ENCODE measurements at regions of chr5 and their contacts with region 1.

Region 1: DNA sequence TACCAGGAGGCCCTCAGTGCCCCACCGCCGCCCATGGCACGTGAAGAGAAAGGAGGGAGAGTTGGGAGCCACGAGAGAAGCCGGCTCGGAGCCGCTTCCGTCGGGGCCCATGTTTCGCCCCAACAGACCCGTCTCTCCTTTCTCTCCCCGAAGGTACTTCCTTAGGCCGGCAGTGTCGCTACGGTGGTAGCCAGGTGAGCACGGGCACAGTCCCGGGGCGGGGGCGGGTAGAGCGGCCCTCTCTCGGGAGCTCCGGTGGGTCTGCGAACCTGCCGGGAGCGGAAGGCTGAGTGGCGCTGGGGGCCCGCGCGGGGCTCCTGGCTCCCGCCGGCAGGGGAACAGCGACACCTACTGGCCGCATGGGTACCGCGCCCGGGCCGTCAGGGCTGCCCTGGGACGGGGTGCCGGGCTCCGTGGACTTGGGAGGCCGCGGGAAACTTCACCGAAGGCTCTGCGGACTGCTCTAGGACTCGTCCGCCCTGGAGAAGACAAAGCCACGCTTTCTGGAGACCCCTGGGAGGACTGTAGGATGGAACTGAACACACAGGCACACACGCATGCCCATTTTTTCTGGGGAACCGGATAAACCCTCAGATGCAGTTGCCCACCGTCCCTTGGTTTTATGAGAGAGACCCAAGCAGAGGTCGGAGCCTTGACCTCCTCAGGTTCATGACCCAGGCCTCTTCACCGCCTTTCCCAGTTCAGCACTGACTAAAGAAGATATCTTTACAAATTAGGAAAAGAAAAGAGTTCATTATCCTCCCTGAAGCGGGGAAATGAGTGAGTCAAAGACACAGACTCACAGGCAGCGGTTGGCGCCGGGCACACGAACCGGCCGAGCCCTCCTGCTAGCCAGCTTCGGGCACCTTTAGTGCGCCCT is 202.5 kb downstream of the MEF2C start:
- DNase-seq: peak; percentile 72 to 93
- ATAC-seq: peak; percentile 87
- H3K4me3 ChIP-seq: no peak overlapping the region
- H3K27ac ChIP-seq: no peak overlapping the region
- H3K4me1 ChIP-seq: no peaks in the 10 kb centered on the region
- H3K27me3 ChIP-seq: no peaks in the 10 kb centered on the region

Region 2: GRCh38 chr5:87780831-87781760 is 899.4 kb before region 1 on chr5:
- intact Hi-C with region 1: loop called (anchors 2 to 5 kb)
- DNase-seq: peak; percentile 87 to 89
- ATAC-seq: peak; percentile 89
- H3K4me3 ChIP-seq: no peak overlapping the region
- H3K27ac ChIP-seq: no peak overlapping the region
- H3K4me1 ChIP-seq: no peaks in the 10 kb centered on the region
- H3K27me3 ChIP-seq: no peaks in the 10 kb centered on the region

Region 3: DNA sequence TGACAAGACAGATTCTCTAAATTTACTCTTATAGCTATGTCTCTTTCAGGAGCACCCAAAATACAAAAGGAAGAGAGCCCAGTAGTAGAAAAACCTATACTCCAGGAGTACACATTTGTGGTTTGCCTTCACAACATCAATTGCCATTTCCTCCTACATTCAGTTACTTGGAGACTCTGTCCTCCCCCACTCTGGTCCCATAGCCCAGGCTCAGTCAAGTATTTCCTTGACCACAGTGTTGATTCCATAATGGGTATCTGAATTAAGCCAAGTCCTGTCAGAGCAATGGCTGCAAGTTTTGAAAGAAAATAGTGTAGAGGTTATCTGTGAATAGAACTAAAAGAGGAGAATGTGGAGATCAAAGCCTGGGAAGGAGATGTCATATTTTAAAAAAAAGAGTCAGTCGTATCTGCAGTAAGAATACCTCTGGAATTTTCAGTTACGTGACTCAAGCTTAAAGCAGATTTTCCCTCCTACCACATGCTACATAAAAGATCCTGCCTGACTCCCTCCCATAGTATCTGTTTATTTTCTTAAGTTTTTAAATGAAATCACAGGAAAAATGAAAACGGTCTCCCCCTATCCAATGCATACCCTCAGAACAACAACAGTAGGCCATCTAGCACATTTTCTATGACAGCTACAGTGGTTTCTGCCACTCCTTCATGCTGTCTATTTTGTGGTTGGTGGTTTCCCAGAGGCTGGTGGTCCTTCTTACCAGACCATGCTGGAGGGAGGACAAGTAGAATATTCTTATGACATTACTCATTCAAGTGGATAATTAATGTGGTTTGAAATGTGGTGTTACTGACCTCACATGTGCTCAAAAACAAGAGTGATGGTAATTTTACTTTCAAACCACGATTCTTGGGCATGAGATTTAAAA is 162.1 kb before region 1 on chr5:
- intact Hi-C with region 1: no loop called
- DNase-seq: no peak
- ATAC-seq: no peak
- H3K4me3 ChIP-seq: no peak overlapping the region
- H3K27ac ChIP-seq: no peak overlapping the region
- H3K4me1 ChIP-seq: no peaks in the 10 kb centered on the region
- H3K27me3 ChIP-seq: no peaks in the 10 kb centered on the region

Region 4: GRCh38 chr5:88644676-88645075 is 35.8 kb before region 1 on chr5:
- intact Hi-C with region 1: no loop called
- DNase-seq: no peak
- ATAC-seq: no peak
- H3K4me3 ChIP-seq: no peak overlapping the region
- H3K27ac ChIP-seq: no peak overlapping the region
- H3K4me1 ChIP-seq: no peaks in the 10 kb centered on the region
- H3K27me3 ChIP-seq: no peaks in the 10 kb centered on the region